Activated CD8-positive, alpha-beta memory T cell treated with anti-CD3 and anti-CD28 coated beads, Interleukin-2, amount 10 ng/mL, durations not matched to agents 7 days and 5 days (primary cell): ENCODE measurements at regions of chr15 and their contacts with region 1.

Region 1: DNA sequence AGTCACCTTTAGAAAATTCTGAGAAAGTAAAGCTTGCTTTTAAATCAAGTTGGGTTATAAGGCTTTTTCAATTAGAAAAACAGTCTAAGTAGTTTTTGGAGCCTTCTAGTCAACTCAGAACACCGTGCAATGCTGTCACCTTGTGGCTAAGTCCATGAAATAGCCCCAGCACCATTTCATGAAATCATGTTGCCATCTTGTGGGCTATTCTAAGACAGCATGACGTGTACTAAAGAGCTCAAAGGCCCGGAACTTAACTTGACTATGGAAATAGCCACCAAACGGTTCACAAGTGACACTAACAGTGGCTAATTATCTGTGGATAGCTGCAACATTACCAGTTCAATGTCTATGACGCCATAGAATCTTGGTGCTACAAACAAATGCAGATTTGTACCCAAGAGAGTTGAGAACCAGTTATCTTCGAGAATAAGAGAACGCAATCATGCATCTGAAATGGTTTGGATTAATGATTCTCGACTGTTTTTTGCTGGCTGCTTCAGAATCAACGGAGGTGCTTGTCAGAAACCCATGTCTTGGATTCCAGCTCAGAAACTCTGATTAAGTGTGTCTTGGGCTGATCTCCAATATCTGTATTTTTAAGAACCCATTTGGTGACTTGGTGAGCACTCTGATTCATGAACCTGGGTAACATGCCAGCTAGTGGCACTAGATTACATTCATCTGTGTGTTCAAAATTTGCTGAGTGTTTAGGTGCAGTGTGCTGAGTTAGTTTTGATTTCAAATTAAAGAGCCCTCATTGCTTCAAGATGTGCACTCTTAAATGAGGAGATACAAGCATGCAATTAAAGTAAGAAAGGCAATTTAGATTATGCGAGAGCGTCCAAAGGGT is 111.2 kb upstream of the MCTP2 start:
- DNase-seq: peak; percentile 77
- ATAC-seq: peak; percentile 100
- H3K4me3 Mint-ChIP-seq: no peak overlapping the region
- H3K27ac Mint-ChIP-seq: no peak overlapping the region
- H3K4me1 Mint-ChIP-seq: peaks cover under 1% of the 10 kb centered on the region
- H3K27me3 Mint-ChIP-seq: peaks cover under 1% of the 10 kb centered on the region

Region 2: DNA sequence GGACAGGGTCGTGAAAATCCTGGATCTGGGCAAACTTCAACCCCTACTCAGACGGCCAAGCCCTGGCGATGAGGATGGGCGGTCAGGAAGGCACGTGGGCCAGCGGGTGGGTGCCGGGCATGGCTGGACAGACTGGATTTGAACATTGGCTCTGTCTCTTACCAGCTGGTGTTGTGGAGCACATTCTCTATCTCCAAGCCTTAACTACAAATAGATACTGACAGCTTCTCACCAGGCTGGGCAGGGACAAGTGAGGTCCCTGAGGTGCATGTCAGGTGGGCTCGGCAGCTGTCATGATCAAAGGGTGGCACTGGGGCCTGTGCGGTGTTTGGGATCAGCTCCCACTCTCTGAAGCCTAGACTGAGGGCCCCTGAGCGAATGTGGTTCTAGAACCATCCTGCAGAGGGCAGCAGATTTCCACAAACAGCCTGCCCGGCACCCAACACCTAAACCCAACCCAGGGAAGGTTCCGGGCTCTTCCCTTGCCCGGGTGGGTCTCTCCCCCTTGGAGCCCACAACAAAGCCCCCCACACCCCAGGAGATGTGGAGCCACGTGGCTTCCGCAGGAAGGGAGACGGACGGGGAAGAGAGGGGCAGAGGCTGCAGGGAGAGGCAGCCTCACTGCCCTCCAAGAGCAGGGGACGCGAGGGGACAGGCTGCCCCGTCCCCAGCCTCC is 1089.6 kb before region 1 on chr15:
- CTCF ChIA-PET with region 1: interaction called, 57 read pairs
- DNase-seq: peak; percentile 73
- ATAC-seq: peak; percentile 86
- H3K4me3 Mint-ChIP-seq: no peak overlapping the region
- H3K27ac Mint-ChIP-seq: no peak overlapping the region
- H3K4me1 Mint-ChIP-seq: peaks cover 12% of the 10 kb centered on the region
- H3K27me3 Mint-ChIP-seq: no peaks in the 10 kb centered on the region

Region 3: DNA sequence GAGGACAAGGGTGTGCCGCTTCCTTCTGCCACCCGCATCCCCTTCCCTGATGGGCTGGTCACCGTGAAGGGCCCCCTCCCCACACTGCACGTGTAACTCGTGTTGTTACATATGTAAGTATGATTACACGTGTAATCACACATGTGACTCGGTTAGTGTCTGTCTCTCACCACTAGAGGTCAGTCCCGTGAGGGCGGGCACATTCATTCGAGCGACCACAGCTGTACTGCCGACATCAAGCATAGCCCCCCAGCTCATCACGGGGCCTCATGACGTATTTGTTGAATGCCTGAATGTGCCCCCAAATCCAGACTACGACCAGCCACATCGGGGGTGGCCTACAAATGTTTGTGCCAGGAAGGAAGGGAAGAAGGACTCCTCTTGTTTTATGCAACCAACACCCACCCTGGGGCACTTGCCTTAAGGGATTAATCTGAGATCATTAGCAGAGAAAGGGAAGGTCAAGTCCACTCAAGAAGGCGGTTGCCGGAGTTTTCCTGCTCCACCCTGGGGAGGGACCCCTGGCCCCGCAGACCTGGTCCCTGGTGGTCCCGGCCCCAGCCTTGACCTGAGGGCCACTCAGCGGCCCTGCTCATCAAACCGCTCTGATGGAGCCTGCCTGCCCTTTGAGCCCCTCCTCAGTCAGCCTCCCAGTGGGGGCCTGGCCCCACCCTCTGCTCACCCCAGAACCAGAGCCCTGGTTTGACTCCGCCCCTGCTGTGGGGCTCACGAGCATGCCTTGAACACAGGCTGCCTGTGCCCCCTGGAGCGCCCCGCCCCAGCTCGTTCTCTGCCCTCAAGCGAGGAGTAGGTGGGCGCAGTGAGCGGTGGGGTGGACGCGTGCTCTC is 1084.0 kb before region 1 on chr15:
- CTCF ChIA-PET with region 1: interaction called, 57 read pairs
- DNase-seq: peak; percentile 68
- ATAC-seq: peak; percentile 74
- H3K4me3 Mint-ChIP-seq: no peak overlapping the region
- H3K27ac Mint-ChIP-seq: no peak overlapping the region
- H3K4me1 Mint-ChIP-seq: peaks cover 5% of the 10 kb centered on the region
- H3K27me3 Mint-ChIP-seq: no peaks in the 10 kb centered on the region

Region 4: GRCh38 chr15:93087825-93088199 is 1032.3 kb before region 1 on chr15:
- CTCF ChIA-PET with region 1: interaction called, 29 read pairs
- DNase-seq: peak; percentile 80
- ATAC-seq: peak; percentile 59
- H3K4me3 Mint-ChIP-seq: peak overlapping the region; percentile 68
- H3K27ac Mint-ChIP-seq: no peak overlapping the region
- H3K4me1 Mint-ChIP-seq: peaks cover 14% of the 10 kb centered on the region
- H3K27me3 Mint-ChIP-seq: peaks cover 73% of the 10 kb centered on the region

Region 5: GRCh38 chr15:93954985-93955748 is 165.0 kb before region 1 on chr15:
- CTCF ChIA-PET with region 1: no interaction called
- DNase-seq: no peak
- ATAC-seq: no peak
- H3K4me3 Mint-ChIP-seq: no peak overlapping the region
- H3K27ac Mint-ChIP-seq: no peak overlapping the region
- H3K4me1 Mint-ChIP-seq: no peaks in the 10 kb centered on the region
- H3K27me3 Mint-ChIP-seq: peaks cover 4% of the 10 kb centered on the region

Region 6: DNA sequence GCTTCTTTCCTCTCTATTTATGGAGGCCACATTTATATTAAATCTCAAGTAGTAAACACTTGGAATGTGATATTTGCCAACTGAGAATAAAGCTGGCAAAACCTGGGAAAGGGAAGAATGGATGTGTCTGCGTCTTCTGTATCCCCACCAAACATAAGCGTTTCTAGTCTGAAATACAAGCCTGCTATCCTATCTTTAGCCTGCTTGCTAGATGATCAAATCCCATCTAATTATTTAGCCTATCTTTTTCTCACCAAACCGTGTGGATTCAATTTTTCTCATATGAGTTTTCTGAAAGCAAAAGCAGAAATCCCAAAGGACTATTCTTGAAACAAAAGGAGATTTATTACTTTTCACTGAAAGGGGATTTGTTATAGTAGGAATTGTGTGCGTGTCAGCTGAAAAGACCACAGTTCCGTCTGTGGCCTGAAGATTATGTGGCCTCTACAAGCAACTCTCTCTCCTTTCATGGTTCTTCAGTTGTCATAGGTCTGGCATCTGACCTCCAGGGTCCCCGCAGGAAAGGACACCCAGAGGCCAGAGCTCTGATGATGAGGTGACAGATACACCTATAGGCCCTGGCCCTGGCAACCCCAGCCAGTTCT is 154.7 kb before region 1 on chr15:
- CTCF ChIA-PET with region 1: no interaction called
- DNase-seq: no peak
- ATAC-seq: no peak
- H3K4me3 Mint-ChIP-seq: no peak overlapping the region
- H3K27ac Mint-ChIP-seq: no peak overlapping the region
- H3K4me1 Mint-ChIP-seq: no peaks in the 10 kb centered on the region
- H3K27me3 Mint-ChIP-seq: peaks cover 8% of the 10 kb centered on the region

Region 7: DNA sequence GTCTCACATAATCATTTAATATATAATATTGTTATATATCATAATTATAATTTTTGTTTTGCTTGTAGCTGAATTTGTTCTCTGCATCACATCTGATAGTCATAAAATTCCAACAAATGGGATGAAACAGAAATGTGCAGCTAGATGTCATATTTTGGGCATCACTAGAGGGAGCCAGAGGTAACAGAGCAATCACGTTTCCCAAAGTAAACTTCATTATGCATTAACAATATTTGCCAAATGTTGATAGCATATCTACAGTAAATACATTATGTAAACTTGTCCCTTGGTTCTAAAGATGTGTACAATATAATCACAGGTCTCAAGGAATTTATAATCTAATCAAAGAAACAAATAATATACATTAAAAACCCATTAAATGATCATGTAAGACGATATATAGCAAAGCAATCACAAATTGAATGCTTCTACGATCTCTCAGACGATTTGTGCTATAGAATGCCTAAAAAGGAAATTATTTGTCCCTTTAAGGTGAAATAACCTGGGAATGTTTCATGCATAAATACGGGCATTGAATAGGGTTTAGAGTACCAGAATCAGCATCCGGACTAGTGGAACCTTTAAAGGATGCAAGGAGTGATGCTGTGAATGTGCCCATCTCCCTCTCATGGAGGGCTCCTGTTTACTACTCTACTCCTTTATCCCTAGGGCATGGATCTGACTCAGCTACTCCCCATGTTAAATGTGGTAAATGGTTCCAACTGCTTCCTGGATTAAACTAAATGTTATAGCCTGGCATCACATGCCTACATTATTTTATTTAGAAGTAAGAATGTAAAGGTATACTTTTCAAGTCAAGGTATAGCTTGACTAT is 122.8 kb before region 1 on chr15:
- CTCF ChIA-PET with region 1: interaction called, 13 read pairs
- DNase-seq: no peak
- ATAC-seq: no peak
- H3K4me3 Mint-ChIP-seq: no peak overlapping the region
- H3K27ac Mint-ChIP-seq: no peak overlapping the region
- H3K4me1 Mint-ChIP-seq: no peaks in the 10 kb centered on the region
- H3K27me3 Mint-ChIP-seq: peaks cover 5% of the 10 kb centered on the region

Region 8: GRCh38 chr15:94086341-94086740 is 33.8 kb before region 1 on chr15:
- CTCF ChIA-PET with region 1: interaction called, 10 read pairs
- DNase-seq: no peak
- ATAC-seq: no peak
- H3K4me3 Mint-ChIP-seq: no peak overlapping the region
- H3K27ac Mint-ChIP-seq: no peak overlapping the region
- H3K4me1 Mint-ChIP-seq: no peaks in the 10 kb centered on the region
- H3K27me3 Mint-ChIP-seq: peaks cover 43% of the 10 kb centered on the region

Region 9: DNA sequence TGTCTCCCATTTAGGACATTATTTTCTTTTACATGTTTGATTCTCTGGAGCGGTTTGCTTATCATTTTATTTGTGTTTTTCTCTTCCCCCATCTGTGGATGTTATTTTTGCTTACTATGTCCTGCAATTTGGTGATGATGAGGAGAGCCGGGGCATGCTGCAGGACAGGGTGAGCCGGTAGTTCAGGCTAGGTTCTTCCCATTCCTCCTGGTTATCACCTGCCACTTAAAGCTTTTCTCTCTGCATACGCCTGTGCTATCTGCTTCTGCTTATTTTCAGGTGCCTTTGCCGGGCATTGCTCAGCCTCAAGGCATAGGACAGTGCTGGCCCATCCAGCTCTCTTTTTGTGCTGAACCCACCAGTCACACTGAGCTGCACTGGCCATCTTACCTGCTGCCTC is 197.1 kb after region 1 on chr15:
- CTCF ChIA-PET with region 1: no interaction called
- DNase-seq: no peak
- ATAC-seq: no peak
- H3K4me3 Mint-ChIP-seq: no peak overlapping the region
- H3K27ac Mint-ChIP-seq: no peak overlapping the region
- H3K4me1 Mint-ChIP-seq: peaks cover 33% of the 10 kb centered on the region
- H3K27me3 Mint-ChIP-seq: no peaks in the 10 kb centered on the region

Region 10: DNA sequence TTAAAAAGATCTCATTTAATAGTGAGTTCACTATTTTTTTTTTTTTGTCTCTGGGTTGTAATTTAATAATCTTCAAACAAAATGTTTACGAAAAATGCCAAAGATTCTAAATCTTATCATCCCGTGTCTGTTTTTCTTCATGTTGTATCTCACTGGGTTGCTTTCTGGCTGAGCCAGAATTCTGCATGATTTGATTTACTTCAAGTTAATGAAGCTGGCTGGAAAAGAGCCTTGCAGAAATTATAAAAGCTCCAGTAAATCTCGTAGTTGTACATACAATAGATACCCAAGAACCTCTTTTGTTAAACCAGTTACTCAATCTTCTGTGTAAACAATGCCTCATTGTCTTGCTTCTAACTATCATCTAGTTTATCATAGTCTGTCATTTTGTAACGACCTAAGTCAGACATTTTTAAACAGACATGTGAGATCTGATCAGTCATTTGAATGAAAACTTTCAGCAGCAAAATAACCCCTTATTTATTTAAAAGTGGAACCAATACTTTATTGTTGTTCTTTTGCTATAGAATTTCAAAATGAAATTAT is 360.2 kb after region 1 on chr15:
- CTCF ChIA-PET with region 1: no interaction called
- DNase-seq: no peak
- ATAC-seq: no peak
- H3K4me3 Mint-ChIP-seq: no peak overlapping the region
- H3K27ac Mint-ChIP-seq: no peak overlapping the region
- H3K4me1 Mint-ChIP-seq: no peaks in the 10 kb centered on the region
- H3K27me3 Mint-ChIP-seq: no peaks in the 10 kb centered on the region